Mucosa of descending colon (tissue), 3 donors: ENCODE measurements at regions of chr11 and their contacts with region 1.

Region 1: DNA sequence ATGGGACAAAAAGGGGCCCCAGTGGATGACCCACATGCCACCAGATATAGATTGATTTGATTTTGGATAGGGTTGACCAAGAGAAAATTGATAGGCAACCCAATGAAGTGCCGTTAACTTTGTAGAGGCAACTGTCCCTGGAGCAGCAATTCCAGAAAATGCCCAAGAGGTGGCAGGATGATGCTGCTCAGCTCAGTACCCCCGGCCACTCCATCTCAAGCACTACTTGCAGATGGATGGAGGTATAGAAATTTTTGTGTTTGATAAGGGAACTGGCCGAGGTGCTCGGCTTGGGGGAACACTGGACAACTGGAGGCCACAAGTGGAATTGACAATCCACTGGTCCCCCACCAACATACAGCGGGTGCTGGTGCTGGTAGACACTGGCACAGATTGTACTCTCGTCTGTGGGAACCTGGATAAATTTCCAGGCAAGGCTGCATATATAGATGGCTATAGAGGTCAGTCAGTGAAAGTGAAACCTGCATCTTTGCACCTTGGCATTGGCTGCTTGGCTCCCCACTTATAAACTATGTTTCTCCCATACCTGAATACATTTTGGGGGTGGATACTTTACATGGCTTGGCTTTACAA is 86.3 kb downstream of the CCDC83 start:
- DNase-seq: peak in 1 of 3 donors; percentile 49
- ATAC-seq: peak; percentile 56
- H3K4me3 ChIP-seq: no peak overlapping the region
- H3K4me1 ChIP-seq: no peaks in the 10 kb centered on the region
- CTCF ChIP-seq: no peak

Region 2: GRCh38 chr11:86218125-86219084 is 276.9 kb after region 1 on chr11:
- intact Hi-C with region 1: loop called in 1 of 2 experiments (anchors 10 kb)
- DNase-seq: peak in 2 of 3 donors; percentile 70 to 80
- ATAC-seq: peak; percentile 95
- H3K4me3 ChIP-seq: no peak overlapping the region
- H3K4me1 ChIP-seq: peaks cover 3% of the 10 kb centered on the region
- CTCF ChIP-seq: peak; percentile 74

Region 3: DNA sequence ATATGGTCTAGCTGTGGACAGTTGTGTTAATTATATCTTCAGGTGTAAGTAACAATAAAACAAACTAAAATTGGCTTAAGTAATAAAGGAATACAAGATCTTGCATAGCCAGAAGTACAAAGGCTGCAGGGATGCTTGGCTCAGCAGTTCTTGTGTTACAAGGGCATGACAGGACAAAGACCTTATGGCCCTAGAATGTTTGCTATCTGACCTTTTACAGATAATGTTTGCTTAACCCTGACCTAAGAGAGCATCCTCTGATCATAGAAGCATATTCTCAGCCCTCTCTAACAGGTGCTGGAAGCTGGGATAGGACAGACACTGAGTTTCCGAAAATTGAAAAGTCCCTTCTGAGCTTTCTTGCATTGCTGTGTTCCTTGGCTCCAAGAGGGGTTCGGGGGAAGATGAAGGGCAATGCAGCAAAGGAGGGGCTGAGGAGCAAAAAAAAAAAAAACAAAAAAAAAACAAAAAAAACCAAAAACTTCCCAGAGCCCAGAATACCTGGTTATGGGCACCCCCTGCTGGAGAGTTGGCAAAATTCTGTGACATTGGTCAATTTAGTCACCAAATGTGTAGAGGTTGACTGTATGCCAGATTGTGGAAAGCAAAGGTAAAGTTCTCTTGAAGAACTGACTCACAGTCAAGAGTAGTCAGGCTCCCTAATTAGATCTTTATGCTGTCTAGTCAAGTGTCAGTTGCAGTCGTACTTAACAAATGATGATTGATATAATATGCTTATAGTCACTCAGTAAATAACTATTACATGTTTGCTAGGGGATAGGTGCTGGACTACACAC is 350.2 kb after region 1 on chr11:
- intact Hi-C with region 1: loop called in 1 of 2 experiments (anchors 5 kb)
- DNase-seq: peak in 2 of 3 donors; percentile 37 to 55
- ATAC-seq: peak; percentile 72
- H3K4me3 ChIP-seq: no peak overlapping the region
- H3K4me1 ChIP-seq: peaks cover 4% of the 10 kb centered on the region
- CTCF ChIP-seq: peak; percentile 47